Activated CD4-positive, alpha-beta T cell treated with anti-CD3 and anti-CD28 coated beads, Interleukin-2, amount 10 ng/mL, durations not matched to agents 24 days and 14 days (primary cell): ENCODE measurements at regions of chr1 and their contacts with region 1.

Region 1: GRCh38 chr1:155466996-155467395 is 95.6 kb downstream of the ASH1L start:
- DNase-seq: no peak
- H3K4me3 Mint-ChIP-seq: peak overlapping the region; percentile 11
- H3K27ac Mint-ChIP-seq: peak overlapping the region; percentile 82
- H3K4me1 Mint-ChIP-seq: peaks cover 33% of the 10 kb centered on the region
- H3K27me3 Mint-ChIP-seq: no peaks in the 10 kb centered on the region

Region 2: GRCh38 chr1:155093911-155094621 is 372.9 kb before region 1 on chr1:
- intact Hi-C with region 1: no loop called
- DNase-seq: peak; percentile 71
- H3K4me3 Mint-ChIP-seq: no peak overlapping the region
- H3K27ac Mint-ChIP-seq: no peak overlapping the region
- H3K4me1 Mint-ChIP-seq: peaks cover 3% of the 10 kb centered on the region
- H3K27me3 Mint-ChIP-seq: peaks cover 27% of the 10 kb centered on the region

Region 3: DNA sequence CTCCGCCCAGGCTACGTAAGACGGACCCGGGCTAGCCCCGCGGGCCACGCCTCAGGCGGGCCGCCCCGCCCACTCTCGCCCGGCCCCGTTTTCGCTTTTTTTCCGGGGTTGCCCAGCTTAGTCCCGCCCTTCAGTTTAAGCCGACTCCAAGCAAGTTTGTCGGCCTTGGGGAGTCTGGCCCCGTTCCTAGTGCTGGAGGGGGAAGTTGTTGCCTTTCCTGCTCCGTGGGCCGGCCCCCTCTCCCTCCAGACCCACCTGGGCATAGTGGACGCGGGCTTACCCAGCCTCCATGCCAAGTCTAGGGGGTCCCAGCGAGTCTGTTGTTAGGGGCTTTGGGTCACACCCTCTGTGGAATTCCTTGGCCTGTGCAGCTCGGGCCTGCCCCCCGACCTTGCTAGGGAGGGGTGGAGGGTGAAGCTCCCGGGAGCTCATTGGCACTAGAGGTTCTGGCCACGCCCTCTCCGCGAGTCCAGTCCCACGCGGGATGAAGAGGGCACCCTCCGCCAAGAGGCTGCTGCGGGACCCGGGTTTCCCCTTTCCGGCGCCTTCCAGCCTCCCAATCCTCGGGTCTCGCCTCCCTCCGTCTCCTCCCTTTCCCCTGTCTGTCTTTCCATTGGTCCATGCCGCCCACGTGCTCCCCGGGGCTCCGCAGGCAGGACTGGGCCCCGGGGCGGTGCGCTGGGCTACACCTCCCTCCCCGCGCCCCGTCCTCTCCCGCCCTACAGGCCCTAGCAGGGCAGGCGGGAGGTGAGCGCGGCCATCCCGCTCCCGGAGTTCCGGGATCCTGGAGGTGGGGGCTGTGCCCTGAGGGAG is 143.0 kb before region 1 on chr1:
- intact Hi-C with region 1: no loop called
- DNase-seq: peak; percentile 98
- H3K4me3 Mint-ChIP-seq: peak overlapping the region; percentile 91
- H3K27ac Mint-ChIP-seq: peak overlapping the region; percentile 86
- H3K4me1 Mint-ChIP-seq: peaks cover 36% of the 10 kb centered on the region
- H3K27me3 Mint-ChIP-seq: no peaks in the 10 kb centered on the region

Region 4: GRCh38 chr1:155513300-155513916 is 46.4 kb after region 1 on chr1:
- intact Hi-C with region 1: loop called (anchors 5 kb)
- DNase-seq: no peak
- H3K4me3 Mint-ChIP-seq: no peak overlapping the region
- H3K27ac Mint-ChIP-seq: no peak overlapping the region
- H3K4me1 Mint-ChIP-seq: peaks cover 30% of the 10 kb centered on the region
- H3K27me3 Mint-ChIP-seq: no peaks in the 10 kb centered on the region

Region 5: GRCh38 chr1:155540000-155540874 is 73.2 kb after region 1 on chr1:
- intact Hi-C with region 1: loop called (anchors 2 kb)
- DNase-seq: peak; percentile 61
- H3K4me3 Mint-ChIP-seq: peak overlapping the region; percentile 21
- H3K27ac Mint-ChIP-seq: peak overlapping the region; percentile 82
- H3K4me1 Mint-ChIP-seq: peaks cover 43% of the 10 kb centered on the region
- H3K27me3 Mint-ChIP-seq: no peaks in the 10 kb centered on the region

Region 6: GRCh38 chr1:155562581-155563376 is 95.8 kb after region 1 on chr1 and contains the start of gene ASH1L:
- intact Hi-C with region 1: loop called (anchors 10 kb)
- DNase-seq: peak; percentile 96
- H3K4me3 Mint-ChIP-seq: peak within 1 kb of the TSS; percentile 96
- H3K27ac Mint-ChIP-seq: peak within 1 kb of the TSS; percentile 99
- H3K4me1 Mint-ChIP-seq: peaks cover 35% of the 10 kb centered on the region
- H3K27me3 Mint-ChIP-seq: no peaks in the 10 kb centered on the region
- total RNA-seq, gene ASH1L: 38.9 and 44.7 TPM in 2 replicates

Region 7: GRCh38 chr1:156319664-156320063 is 852.7 kb after region 1 on chr1:
- intact Hi-C with region 1: no loop called
- DNase-seq: peak; percentile 68
- H3K4me3 Mint-ChIP-seq: no peak overlapping the region
- H3K27ac Mint-ChIP-seq: no peak overlapping the region
- H3K4me1 Mint-ChIP-seq: no peaks in the 10 kb centered on the region
- H3K27me3 Mint-ChIP-seq: no peaks in the 10 kb centered on the region